Activated CD4-positive, alpha-beta memory T cell treated with anti-CD3 and anti-CD28 coated beads for 36 hours (primary cell): ENCODE measurements at regions of chrX and their contacts with region 1.

Region 1: GRCh38 chrX:132219343-132219768 is at the start of gene RAP2C:
- DNase-seq: peak; percentile 74
- H3K4me3 Mint-ChIP-seq: peak within 1 kb of the TSS; percentile 83
- H3K27ac Mint-ChIP-seq: peak within 1 kb of the TSS; percentile 96
- H3K4me1 Mint-ChIP-seq: peaks cover 15% of the 10 kb centered on the region
- H3K27me3 Mint-ChIP-seq: no peaks in the 10 kb centered on the region
- total RNA-seq, gene RAP2C: 41.2 to 43.7 TPM

Region 2: GRCh38 chrX:131812836-131813825 is 406.2 kb before region 1 on chrX:
- CTCF ChIA-PET with region 1: no interaction called
- POLR2A ChIA-PET with region 1: no interaction called
- intact Hi-C with region 1: loop called (anchors 2 kb)
- DNase-seq: peak; percentile 79
- H3K4me3 Mint-ChIP-seq: peak overlapping the region; percentile 72
- H3K27ac Mint-ChIP-seq: peak overlapping the region; percentile 91
- H3K4me1 Mint-ChIP-seq: peaks cover 30% of the 10 kb centered on the region
- H3K27me3 Mint-ChIP-seq: no peaks in the 10 kb centered on the region

Region 3: GRCh38 chrX:131841496-131842410 is 377.6 kb before region 1 on chrX:
- CTCF ChIA-PET with region 1: interaction called, 16 read pairs
- POLR2A ChIA-PET with region 1: no interaction called
- intact Hi-C with region 1: loop called (anchors 1 kb)
- DNase-seq: peak; percentile 27
- H3K4me3 Mint-ChIP-seq: no peak overlapping the region
- H3K27ac Mint-ChIP-seq: no peak overlapping the region
- H3K4me1 Mint-ChIP-seq: no peaks in the 10 kb centered on the region
- H3K27me3 Mint-ChIP-seq: no peaks in the 10 kb centered on the region

Region 4: DNA sequence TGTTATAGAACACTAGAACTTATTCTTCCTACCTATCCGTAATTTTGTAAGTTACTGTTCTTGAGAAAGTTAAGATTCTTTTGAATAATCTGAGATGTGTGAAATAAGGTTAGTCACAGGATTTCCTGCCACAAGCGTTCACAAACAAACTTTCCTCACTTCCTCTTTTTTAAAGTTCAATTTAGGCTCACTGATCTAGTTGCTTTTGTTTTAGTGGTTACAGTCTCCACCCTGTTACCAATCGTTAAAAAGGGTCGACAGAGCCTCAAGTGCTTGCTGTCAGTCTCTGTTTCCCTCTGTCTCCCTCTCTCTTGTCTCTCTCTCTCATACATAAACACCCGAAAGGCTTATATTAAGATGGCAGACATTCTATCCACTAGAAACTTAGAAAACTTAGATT is 232.1 kb before region 1 on chrX:
- CTCF ChIA-PET with region 1: no interaction called
- POLR2A ChIA-PET with region 1: no interaction called
- intact Hi-C with region 1: loop called (anchors 1 kb)
- DNase-seq: peak; percentile 9
- H3K4me3 Mint-ChIP-seq: peak overlapping the region; percentile 42
- H3K27ac Mint-ChIP-seq: peak overlapping the region; percentile 88
- H3K4me1 Mint-ChIP-seq: peaks cover 43% of the 10 kb centered on the region
- H3K27me3 Mint-ChIP-seq: no peaks in the 10 kb centered on the region

Region 5: DNA sequence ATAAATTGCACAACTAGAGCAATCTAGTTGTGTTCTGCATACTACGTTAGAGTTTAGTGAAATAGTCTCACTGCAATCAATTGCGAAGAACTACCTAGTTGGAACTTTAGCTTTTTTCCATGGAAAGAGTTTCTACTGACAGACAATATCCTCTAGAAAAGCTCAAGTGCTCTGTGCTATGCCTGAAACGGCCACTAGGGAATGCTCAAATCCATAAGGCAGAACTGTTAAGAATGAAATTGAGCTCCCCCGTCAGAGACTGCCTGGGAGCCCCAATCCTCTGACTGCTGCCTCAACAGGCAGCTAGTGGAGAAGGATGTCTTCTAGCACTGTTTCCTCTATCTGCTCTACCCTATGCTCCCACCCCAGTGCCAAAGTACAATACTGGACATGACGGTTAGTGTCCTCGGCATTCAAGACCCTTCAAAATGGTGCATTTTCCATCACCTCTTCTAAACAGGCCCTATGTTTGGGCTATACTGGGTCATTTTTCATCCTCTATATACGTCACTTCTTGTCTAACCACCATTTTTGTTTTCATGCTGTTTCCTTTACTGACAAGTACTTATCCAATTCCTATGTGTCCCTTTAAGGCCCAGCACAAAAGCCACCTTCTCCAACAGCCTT is 126.8 kb before region 1 on chrX:
- CTCF ChIA-PET with region 1: interaction called, 54 read pairs
- POLR2A ChIA-PET with region 1: no interaction called
- intact Hi-C with region 1: loop called (anchors 1 kb)
- DNase-seq: peak; percentile 65
- H3K4me3 Mint-ChIP-seq: no peak overlapping the region
- H3K27ac Mint-ChIP-seq: no peak overlapping the region
- H3K4me1 Mint-ChIP-seq: peaks cover 3% of the 10 kb centered on the region
- H3K27me3 Mint-ChIP-seq: peaks cover 2% of the 10 kb centered on the region

Region 6: GRCh38 chrX:132480581-132481203 is 261.3 kb after region 1 on chrX:
- CTCF ChIA-PET with region 1: no interaction called
- POLR2A ChIA-PET with region 1: no interaction called
- intact Hi-C with region 1: loop called (anchors 2 kb)
- DNase-seq: peak; percentile 55
- H3K4me3 Mint-ChIP-seq: peak overlapping the region; percentile 75
- H3K27ac Mint-ChIP-seq: peak overlapping the region; percentile 97
- H3K4me1 Mint-ChIP-seq: peaks cover 37% of the 10 kb centered on the region
- H3K27me3 Mint-ChIP-seq: no peaks in the 10 kb centered on the region

Region 7: GRCh38 chrX:132740316-132741123 is 521.2 kb after region 1 on chrX:
- CTCF ChIA-PET with region 1: no interaction called
- POLR2A ChIA-PET with region 1: no interaction called
- intact Hi-C with region 1: loop called (anchors 10 kb)
- DNase-seq: no peak
- H3K4me3 Mint-ChIP-seq: no peak overlapping the region
- H3K27ac Mint-ChIP-seq: no peak overlapping the region
- H3K4me1 Mint-ChIP-seq: peaks cover 24% of the 10 kb centered on the region
- H3K27me3 Mint-ChIP-seq: no peaks in the 10 kb centered on the region